Transverse colon (tissue), 4 donors: ENCODE measurements at regions of chr4 and their contacts with region 1.

Region 1: GRCh38 chr4:128558896-128559679 is 250.4 kb upstream of the JADE1 start:
- DNase-seq: no peak
- H3K4me3 ChIP-seq: no peak overlapping the region
- H3K27ac ChIP-seq: peak overlapping the region; percentile 45 to 73 (median 62)
- H3K4me1 ChIP-seq: peaks cover 2 to 16% (median 8%) of the 10 kb centered on the region in 4 donors
- H3K27me3 ChIP-seq: no peaks in the 10 kb centered on the region
- CTCF ChIP-seq: no peak
- EP300 ChIP-seq: no peak
- POLR2A ChIP-seq: no peak

Region 2: DNA sequence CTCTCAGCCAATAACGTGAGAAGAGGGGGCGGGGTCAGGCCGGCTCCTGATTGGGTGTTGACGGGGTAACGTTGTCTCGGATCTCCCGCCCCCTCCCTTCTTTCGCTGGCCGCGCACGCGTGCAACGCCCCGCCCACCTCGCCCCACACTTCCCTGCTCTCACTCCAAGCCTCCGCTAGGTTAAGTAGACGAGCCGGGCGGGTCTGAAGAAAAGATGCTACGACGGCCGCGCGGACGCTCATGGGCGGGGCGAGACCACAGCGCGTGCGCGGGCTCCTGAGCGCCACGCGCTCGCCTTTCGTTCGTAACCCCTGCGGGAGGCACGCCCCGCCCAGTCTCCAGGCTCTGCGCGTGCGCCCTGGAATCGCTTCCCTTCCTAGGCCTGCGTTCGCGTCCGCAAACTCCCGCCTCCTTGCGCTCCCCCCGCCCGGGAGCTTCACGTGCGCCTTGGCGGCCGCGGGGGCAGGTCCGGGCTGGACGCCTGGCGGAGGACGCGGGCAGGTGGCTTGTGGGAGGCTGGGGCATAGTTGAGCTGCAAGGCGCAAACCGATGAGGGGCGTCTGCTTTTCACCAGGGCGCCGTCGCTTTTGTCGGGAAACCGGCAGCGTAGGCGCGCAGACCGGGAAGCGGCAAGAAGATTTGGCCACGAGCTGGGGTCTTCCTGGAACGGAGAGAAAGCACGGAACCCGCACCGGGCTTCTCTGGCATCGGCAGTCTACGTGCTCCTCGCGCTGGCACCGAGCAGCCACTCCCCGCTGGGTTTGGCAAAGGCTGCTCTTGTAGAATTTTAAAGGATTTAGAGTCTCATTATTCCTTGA is 271.0 kb before region 1 on chr4:
- in situ Hi-C with region 1: loop called in 2 of 4 experiments (anchors 25 kb)
- intact Hi-C with region 1: loop called (anchors 10 kb)
- DNase-seq: peak; percentile 100
- H3K4me3 ChIP-seq: peak overlapping the region; percentile 10 to 98 (median 78)
- H3K27ac ChIP-seq: peak overlapping the region; percentile 90 to 96 (median 92)
- H3K4me1 ChIP-seq: peaks cover 6 to 41% (median 17%) of the 10 kb centered on the region in 4 donors
- H3K27me3 ChIP-seq: no peaks in the 10 kb centered on the region
- CTCF ChIP-seq: peak; percentile 32 to 74 (median 39)
- EP300 ChIP-seq: no peak
- POLR2A ChIP-seq: peak; percentile 79

Region 3: DNA sequence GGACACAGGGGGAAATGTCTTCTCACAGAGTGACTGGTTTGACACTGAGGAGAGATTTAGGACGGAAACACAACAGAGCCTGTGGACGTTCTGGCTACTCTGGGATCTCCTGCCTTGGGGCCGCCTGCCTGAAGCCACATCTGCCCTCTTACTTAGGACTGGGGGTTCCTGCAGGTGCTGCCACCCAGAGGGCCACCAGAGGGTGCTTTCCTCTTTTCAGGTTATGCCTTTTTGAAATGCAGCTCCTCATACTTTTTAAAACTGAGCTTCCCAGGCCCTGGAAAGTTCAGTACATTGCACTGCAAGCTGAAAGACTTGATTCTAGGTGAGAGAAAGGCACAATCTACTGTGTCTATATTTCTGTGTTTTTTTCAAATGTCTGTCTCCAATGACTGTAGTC is 179.2 kb before region 1 on chr4:
- in situ Hi-C with region 1: no loop called
- intact Hi-C with region 1: loop called (anchors 10 kb)
- DNase-seq: peak; percentile 28
- H3K4me3 ChIP-seq: no peak overlapping the region
- H3K27ac ChIP-seq: no peak overlapping the region
- H3K4me1 ChIP-seq: peaks cover 0 to 13% (median 2%) of the 10 kb centered on the region in 4 donors
- H3K27me3 ChIP-seq: no peaks in the 10 kb centered on the region
- CTCF ChIP-seq: peak; percentile 27 to 42 (median 34)
- EP300 ChIP-seq: no peak
- POLR2A ChIP-seq: no peak

Region 4: GRCh38 chr4:128440923-128441322 is 118.2 kb before region 1 on chr4:
- in situ Hi-C with region 1: no loop called
- intact Hi-C with region 1: no loop called
- DNase-seq: no peak
- H3K4me3 ChIP-seq: no peak overlapping the region
- H3K27ac ChIP-seq: no peak overlapping the region
- H3K4me1 ChIP-seq: no peaks in the 10 kb centered on the region
- H3K27me3 ChIP-seq: no peaks in the 10 kb centered on the region
- CTCF ChIP-seq: no peak
- EP300 ChIP-seq: no peak
- POLR2A ChIP-seq: no peak